ENCODE measurements at regions of chr6 and their contacts with region 1.

Region 1: DNA sequence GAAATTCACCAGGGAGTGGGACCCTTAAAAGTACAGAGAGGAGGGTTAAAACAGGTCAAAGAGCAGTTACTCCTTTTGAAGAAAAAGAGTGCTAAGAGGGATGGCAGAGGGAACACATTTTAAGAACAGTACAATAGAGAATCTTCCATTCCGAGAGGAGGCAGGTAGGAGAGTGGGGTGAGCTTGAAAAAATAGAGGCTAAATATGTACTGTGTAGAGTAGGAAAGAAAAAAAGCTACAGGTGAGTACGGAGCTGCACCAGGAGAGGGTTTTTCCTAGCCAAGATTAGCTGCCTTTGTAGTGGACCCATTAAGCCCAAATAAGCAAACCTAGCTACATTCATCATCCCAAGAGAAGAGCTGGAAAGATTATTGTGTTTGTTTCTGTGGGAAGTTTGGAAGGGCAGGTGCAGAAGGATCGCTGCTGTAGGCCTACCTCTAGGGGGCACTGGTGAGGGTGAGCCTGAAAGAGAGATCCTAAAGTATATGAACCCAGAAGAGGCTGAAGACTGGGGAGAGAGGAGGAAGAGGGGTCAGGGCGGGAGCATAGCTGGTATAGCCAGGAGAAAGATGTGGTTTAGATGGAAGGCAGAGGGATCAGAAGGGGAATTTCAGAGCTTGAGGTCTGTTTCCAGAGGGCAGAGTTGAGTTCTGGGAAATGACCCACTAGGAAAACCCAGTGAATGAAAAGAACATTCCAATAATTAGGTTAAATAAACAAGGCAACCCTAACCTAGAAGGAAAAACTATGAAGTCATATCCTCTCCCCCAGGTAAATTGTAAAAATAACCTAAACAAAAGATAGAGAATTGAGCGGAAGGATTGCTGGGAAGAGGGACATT is 50.2 kb upstream of the HINT3 start:
- DNase-seq: peak; percentile 72
- H3K4me3 Mint-ChIP-seq: no peak overlapping the region
- H3K27ac Mint-ChIP-seq: peak overlapping the region; percentile 20
- H3K4me1 Mint-ChIP-seq: peaks cover 25% of the 10 kb centered on the region
- H3K27me3 Mint-ChIP-seq: no peaks in the 10 kb centered on the region

Region 2: DNA sequence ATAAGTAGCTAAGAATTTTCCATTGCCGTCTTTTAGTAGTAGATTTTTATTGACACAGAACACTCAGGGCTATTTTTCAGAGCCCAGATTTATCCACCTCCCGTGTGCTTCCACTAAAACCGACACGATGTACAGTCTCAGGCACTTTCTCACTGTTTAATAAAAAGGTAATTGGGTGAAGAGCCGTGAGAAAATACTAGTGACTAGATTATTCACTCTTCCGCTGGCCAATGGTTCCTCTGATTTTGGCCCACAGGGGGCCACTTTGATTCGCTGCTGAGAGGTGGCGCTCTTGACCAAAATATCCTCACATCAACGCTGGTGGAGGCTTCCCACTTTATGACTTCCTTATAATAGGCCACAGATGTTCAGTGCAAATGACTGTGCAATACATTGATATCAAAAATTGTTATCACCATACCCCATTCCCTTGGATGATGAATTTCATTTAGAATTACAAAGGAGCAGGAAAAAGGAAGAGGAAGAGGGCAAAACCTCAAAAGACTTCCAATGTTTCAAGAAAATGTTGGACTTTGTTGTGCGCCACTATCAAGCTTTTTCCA is 592.3 kb before region 1 on chr6:
- CTCF ChIA-PET with region 1: no interaction called
- intact Hi-C with region 1: loop called (anchors 5 kb)
- DNase-seq: peak; percentile 61
- H3K4me3 Mint-ChIP-seq: no peak overlapping the region
- H3K27ac Mint-ChIP-seq: no peak overlapping the region
- H3K4me1 Mint-ChIP-seq: no peaks in the 10 kb centered on the region
- H3K27me3 Mint-ChIP-seq: peaks cover 2% of the 10 kb centered on the region

Region 3: GRCh38 chr6:125804264-125804663 is 102.1 kb before region 1 on chr6:
- CTCF ChIA-PET with region 1: interaction called, 3 read pairs
- intact Hi-C with region 1: loop called (anchors 1 kb)
- DNase-seq: peak; percentile 67
- H3K4me3 Mint-ChIP-seq: no peak overlapping the region
- H3K27ac Mint-ChIP-seq: no peak overlapping the region
- H3K4me1 Mint-ChIP-seq: peaks cover 63% of the 10 kb centered on the region
- H3K27me3 Mint-ChIP-seq: no peaks in the 10 kb centered on the region

Region 4: DNA sequence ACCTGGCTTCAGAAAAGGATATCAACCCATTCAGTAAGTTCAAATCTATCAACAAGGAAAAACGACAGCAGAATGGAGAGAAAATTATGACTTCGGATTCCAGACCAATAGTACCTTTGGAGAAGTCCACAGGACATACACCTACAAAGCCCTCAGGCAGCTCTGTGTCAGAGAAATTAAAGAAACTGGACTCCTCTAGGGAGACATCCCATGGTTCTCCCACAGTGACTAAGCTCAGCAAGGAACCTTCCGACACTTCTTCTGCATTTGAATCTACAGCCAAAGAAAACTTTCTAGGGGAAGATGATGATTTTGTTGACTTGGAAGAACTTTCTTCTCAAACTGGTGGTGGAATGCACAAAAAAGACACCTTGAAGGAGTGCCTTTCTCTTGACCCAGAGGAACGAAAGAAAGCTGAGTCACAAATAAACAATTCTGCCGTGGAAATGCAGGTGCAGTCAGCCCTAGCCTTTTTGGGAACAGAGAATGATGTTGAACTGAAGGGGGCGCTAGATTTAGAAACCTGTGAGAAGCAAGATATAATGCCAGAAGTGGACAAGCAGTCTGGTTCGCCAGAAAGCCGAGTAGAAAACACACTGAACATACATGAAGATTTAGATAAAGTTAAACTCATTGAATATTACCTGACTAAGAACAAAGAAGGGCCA is 17.3 kb before region 1 on chr6:
- CTCF ChIA-PET with region 1: interaction called, 10 read pairs
- intact Hi-C with region 1: loop called (anchors 2 kb)
- DNase-seq: peak; percentile 37
- H3K4me3 Mint-ChIP-seq: no peak overlapping the region
- H3K27ac Mint-ChIP-seq: no peak overlapping the region
- H3K4me1 Mint-ChIP-seq: no peaks in the 10 kb centered on the region
- H3K27me3 Mint-ChIP-seq: no peaks in the 10 kb centered on the region

Region 5: GRCh38 chr6:125918681-125919566 is 12.5 kb after region 1 on chr6:
- CTCF ChIA-PET with region 1: interaction called, 47 read pairs
- intact Hi-C with region 1: loop called (anchors 1 kb)
- DNase-seq: peak; percentile 73
- H3K4me3 Mint-ChIP-seq: peak overlapping the region; percentile 78
- H3K27ac Mint-ChIP-seq: peak overlapping the region; percentile 94
- H3K4me1 Mint-ChIP-seq: peaks cover 33% of the 10 kb centered on the region
- H3K27me3 Mint-ChIP-seq: no peaks in the 10 kb centered on the region

Region 6: DNA sequence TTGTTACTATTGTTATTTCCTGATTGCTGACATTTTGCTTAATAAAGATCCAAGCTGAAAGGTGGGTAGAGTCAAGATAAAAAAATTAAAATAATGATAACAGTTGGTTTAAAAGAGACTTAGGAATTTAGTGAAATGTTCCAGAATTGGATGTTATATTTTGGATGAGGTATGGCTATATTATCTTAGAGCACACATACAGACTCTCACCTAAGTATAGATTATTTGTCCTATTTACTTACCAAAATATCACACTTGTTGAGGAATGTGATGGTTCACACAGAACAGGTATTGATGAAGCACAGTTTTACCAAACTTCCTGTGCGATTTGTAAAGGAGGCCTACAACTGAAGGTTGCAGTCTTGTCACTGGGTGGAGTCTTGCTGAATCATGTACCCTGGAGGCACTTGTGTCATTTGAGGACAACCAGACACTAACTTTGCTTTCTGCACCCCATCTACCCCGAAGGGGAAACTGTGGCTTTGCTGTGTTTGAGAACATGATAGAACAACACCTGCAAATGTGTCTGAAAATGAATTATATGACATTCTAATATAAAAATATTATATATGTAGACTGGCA is 17.7 kb after region 1 on chr6:
- CTCF ChIA-PET with region 1: interaction called, 47 read pairs
- intact Hi-C with region 1: loop called (anchors 1 kb)
- DNase-seq: peak; percentile 31
- H3K4me3 Mint-ChIP-seq: no peak overlapping the region
- H3K27ac Mint-ChIP-seq: no peak overlapping the region
- H3K4me1 Mint-ChIP-seq: peaks cover 28% of the 10 kb centered on the region
- H3K27me3 Mint-ChIP-seq: no peaks in the 10 kb centered on the region

Region 7: GRCh38 chr6:125974214-125974866 is 68.0 kb after region 1 on chr6:
- CTCF ChIA-PET with region 1: interaction called, 12 read pairs
- intact Hi-C with region 1: no loop called
- DNase-seq: no peak
- H3K4me3 Mint-ChIP-seq: no peak overlapping the region
- H3K27ac Mint-ChIP-seq: no peak overlapping the region
- H3K4me1 Mint-ChIP-seq: peaks cover 7% of the 10 kb centered on the region
- H3K27me3 Mint-ChIP-seq: no peaks in the 10 kb centered on the region

Measured in activated naive CD4-positive, alpha-beta T cell treated with anti-CD3 and anti-CD28 coated beads for 36 hours (primary cell).